PC-9 (cell line): ENCODE measurements at regions of chr15 and their contacts with region 1.

Region 1: GRCh38 chr15:84929744-84930371 is 45.4 kb downstream of the SLC28A1 start:
- DNase-seq: peak; percentile 97 to 99
- H3K4me3 ChIP-seq: no peak overlapping the region
- H3K27ac ChIP-seq: peak overlapping the region; percentile 80
- H3K4me1 ChIP-seq: peaks cover 55% of the 10 kb centered on the region
- H3K27me3 ChIP-seq: no peaks in the 10 kb centered on the region
- CTCF ChIP-seq: no peak

Region 2: DNA sequence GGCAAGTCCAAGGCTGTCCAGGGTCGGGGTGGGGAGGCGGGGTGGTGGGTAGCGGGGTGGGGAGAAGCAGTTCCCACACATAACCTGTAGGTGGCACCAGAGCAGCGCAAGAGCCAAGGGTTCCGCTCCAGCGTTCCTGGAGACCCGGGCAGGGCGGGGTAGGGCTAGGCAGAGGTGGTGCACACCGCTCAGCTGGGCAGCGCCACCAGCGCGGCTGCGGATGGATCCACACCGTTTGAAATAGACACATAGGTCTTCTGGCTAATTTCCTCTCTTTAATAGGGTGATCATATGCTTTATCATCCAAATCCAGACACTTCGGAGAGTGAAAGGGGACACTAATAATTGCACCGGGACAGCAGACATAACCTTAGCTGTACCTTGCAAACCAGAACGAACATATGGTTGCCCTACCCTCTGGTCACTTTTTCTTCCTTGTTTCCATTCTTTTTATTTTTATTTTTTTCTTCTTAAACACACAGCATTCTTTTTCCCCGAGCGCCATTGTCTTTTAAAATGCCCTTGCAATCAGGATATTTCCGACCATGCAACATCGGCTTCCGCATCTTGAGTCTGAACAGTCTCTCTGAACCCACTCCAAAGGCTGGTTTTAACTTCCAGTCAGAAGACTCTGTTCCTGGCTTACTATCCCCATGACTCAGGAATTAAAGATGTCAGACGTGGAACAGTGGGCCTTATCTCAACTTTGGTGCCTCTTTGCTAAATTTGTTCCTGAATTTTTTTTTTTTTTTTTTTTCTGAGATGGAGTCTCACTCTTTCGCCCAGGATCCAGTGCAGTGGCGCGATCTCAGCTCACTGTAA is 341.6 kb before region 1 on chr15:
- CTCF ChIA-PET with region 1: interaction called, 4 read pairs
- POLR2A ChIA-PET with region 1: no interaction called
- intact Hi-C with region 1: loop called (anchors 2 kb)
- DNase-seq: peak; percentile 57 to 83
- H3K4me3 ChIP-seq: peak overlapping the region; percentile 54; the same call in 1 of the 2 replicates
- H3K27ac ChIP-seq: no peak overlapping the region
- H3K4me1 ChIP-seq: no peaks in the 10 kb centered on the region; the same call in 1 of the 2 replicates
- H3K27me3 ChIP-seq: no peaks in the 10 kb centered on the region
- CTCF ChIP-seq: peak; percentile 81

Region 3: GRCh38 chr15:84658080-84658787 is 271.6 kb before region 1 on chr15 and contains the start of gene NMB:
- CTCF ChIA-PET with region 1: no interaction called
- POLR2A ChIA-PET with region 1: no interaction called
- intact Hi-C with region 1: loop called (anchors 1 kb)
- DNase-seq: peak; percentile 70 to 88
- H3K4me3 ChIP-seq: peak within 1 kb of the TSS; percentile 70
- H3K27ac ChIP-seq: peak within 1 kb of the TSS; percentile 83
- H3K4me1 ChIP-seq: peaks cover 23% of the 10 kb centered on the region
- H3K27me3 ChIP-seq: no peaks in the 10 kb centered on the region
- CTCF ChIP-seq: peak; percentile 73
- total RNA-seq, gene NMB: 66.7 and 77.1 TPM in 2 replicates

Region 4: DNA sequence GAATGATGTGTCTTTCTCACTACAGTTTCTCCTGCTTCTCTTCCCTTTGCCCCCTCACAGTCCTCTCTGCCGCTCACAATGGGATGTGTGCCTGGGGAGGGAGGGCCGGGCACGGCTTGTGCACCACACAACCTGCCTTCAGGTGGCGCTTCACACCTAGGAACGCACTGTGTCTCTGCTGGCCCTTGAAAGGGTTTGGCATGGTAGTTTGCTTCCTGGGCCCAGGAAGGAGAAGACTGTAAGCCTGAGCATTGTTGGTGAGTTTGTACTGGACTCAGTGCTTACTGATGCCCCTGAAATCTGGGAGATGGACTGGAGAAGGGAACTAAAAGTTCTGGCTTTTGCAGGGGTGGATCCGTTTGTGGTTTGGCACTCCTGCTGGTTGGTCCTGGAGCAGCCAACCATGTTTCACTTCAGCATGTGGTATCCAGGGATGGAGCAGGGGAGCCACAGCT is 103.5 kb before region 1 on chr15:
- CTCF ChIA-PET with region 1: interaction called, 5 read pairs
- POLR2A ChIA-PET with region 1: no interaction called
- intact Hi-C with region 1: loop called (anchors 2 kb)
- DNase-seq: peak in 1 of 2 experiments; percentile 43
- H3K4me3 ChIP-seq: no peak overlapping the region
- H3K27ac ChIP-seq: no peak overlapping the region
- H3K4me1 ChIP-seq: peaks cover 8% of the 10 kb centered on the region; the same call in 1 of the 2 replicates
- H3K27me3 ChIP-seq: no peaks in the 10 kb centered on the region
- CTCF ChIP-seq: peak; percentile 66

Region 5: DNA sequence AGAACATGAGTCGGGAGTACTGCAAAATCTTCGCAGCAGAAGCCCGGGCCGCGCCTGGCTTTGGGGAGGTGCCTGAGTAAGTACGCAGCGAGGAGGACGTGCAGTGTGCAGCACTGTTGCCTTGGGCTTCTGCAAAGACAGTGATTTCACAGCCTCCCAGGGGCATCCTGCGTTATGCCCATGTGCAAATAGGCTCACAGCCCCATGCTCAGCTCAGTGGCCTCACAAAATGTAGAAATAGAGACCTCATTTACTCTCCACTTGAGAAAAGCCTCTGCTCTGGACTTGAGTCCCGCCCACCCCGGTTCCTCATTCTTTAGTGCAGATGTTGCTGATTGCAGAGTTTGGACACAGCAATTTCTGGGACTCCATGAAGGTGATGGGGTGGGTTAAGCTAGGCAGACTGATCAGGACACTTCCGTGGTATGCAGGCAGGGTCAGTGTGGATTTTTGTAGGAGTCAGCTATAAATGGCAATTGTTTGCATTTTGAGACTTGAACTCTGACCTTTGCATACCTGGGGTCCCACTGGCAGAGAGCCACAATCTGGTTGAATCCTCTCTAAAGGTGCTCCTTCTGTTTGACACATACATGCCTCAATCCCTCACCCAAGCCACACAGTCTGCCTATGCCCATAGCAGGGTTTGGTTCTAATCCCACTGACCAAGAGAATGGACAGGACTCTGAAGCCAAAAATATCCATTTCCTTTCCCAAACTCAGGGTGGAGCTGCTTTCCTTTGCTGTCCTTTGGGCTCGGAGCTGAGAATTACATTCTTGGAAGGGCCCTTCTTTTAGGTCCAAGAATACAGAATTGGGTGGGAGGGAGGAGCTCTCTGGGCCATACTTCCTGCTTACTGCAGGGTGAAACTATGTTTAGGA is 66.1 kb before region 1 on chr15:
- CTCF ChIA-PET with region 1: interaction called, 8 read pairs
- POLR2A ChIA-PET with region 1: interaction called, 15 read pairs
- intact Hi-C with region 1: no loop called
- DNase-seq: no peak
- H3K4me3 ChIP-seq: no peak overlapping the region
- H3K27ac ChIP-seq: no peak overlapping the region
- H3K4me1 ChIP-seq: peaks cover 26% of the 10 kb centered on the region
- H3K27me3 ChIP-seq: no peaks in the 10 kb centered on the region
- CTCF ChIP-seq: no peak

Region 6: GRCh38 chr15:84915011-84915958 is 14.6 kb before region 1 on chr15:
- CTCF ChIA-PET with region 1: interaction called, 7 read pairs
- POLR2A ChIA-PET with region 1: interaction called, 24 read pairs
- intact Hi-C with region 1: loop called (anchors 2 kb)
- DNase-seq: peak; percentile 95
- H3K4me3 ChIP-seq: no peak overlapping the region
- H3K27ac ChIP-seq: peak overlapping the region; percentile 99
- H3K4me1 ChIP-seq: peaks cover 62% of the 10 kb centered on the region
- H3K27me3 ChIP-seq: no peaks in the 10 kb centered on the region
- CTCF ChIP-seq: no peak

Region 7: DNA sequence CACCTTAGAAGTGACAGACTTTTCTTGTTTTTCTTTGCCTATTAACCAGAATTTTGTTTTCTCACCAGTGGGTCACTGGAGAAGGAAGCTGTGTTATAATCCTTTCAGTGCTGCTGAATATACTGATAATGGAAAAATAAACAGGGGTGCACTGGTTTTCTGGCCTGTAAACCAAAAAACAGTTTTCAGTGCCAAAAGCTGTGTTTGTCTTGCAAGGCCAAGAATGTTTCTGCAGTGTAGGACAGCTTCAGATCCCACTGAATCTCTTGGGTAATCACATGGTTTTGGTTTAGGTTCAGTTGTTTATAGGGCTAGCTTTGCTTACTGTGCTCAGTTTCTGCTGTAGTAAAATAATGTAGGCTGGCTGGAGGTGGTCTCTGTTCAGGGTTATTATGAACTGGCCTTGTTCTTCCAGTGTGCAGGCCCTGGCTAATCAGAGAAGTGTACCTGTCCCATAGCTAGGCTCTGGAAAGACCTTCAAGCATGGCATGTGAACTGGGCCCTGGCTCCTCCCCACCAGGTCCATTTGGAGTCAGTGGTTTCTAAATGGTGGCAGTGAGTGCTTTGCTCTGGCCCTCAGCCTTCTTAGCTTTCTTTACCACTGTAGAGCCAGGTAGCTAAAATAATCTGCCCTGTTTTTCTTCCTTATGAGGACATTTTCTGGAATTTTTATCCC is 70.5 kb after region 1 on chr15:
- CTCF ChIA-PET with region 1: no interaction called
- POLR2A ChIA-PET with region 1: no interaction called
- intact Hi-C with region 1: no loop called
- DNase-seq: no peak
- H3K4me3 ChIP-seq: no peak overlapping the region
- H3K27ac ChIP-seq: no peak overlapping the region
- H3K4me1 ChIP-seq: no peaks in the 10 kb centered on the region
- H3K27me3 ChIP-seq: no peaks in the 10 kb centered on the region
- CTCF ChIP-seq: no peak

Region 8: GRCh38 chr15:85044251-85044853 is 114.5 kb after region 1 on chr15:
- CTCF ChIA-PET with region 1: interaction called, 10 read pairs
- POLR2A ChIA-PET with region 1: no interaction called
- intact Hi-C with region 1: loop called (anchors 1 kb)
- DNase-seq: peak in 1 of 2 experiments; percentile 47
- H3K4me3 ChIP-seq: no peak overlapping the region
- H3K27ac ChIP-seq: no peak overlapping the region
- H3K4me1 ChIP-seq: peaks cover 44% of the 10 kb centered on the region
- H3K27me3 ChIP-seq: no peaks in the 10 kb centered on the region
- CTCF ChIP-seq: peak; percentile 64